WTC11 (cell line): ENCODE measurements at regions of chr14 and their contacts with region 1.

Region 1: GRCh38 chr14:52695481-52696091 is at the start of gene ERO1A:
- DNase-seq: peak; percentile 75
- ATAC-seq: peak; percentile 76
- H3K4me3 Mint-ChIP-seq: peak within 1 kb of the TSS; percentile 95
- H3K27ac Mint-ChIP-seq: peak within 1 kb of the TSS; percentile 92
- H3K4me1 Mint-ChIP-seq: peaks cover 28% of the 10 kb centered on the region
- H3K27me3 Mint-ChIP-seq: no peaks in the 10 kb centered on the region; the same call in none of the 2 replicates
- CTCF ChIP-seq: no peak
- total RNA-seq, gene ERO1A: 44.6 to 58.8 TPM (median 57.8 TPM) in 3 replicates

Region 2: DNA sequence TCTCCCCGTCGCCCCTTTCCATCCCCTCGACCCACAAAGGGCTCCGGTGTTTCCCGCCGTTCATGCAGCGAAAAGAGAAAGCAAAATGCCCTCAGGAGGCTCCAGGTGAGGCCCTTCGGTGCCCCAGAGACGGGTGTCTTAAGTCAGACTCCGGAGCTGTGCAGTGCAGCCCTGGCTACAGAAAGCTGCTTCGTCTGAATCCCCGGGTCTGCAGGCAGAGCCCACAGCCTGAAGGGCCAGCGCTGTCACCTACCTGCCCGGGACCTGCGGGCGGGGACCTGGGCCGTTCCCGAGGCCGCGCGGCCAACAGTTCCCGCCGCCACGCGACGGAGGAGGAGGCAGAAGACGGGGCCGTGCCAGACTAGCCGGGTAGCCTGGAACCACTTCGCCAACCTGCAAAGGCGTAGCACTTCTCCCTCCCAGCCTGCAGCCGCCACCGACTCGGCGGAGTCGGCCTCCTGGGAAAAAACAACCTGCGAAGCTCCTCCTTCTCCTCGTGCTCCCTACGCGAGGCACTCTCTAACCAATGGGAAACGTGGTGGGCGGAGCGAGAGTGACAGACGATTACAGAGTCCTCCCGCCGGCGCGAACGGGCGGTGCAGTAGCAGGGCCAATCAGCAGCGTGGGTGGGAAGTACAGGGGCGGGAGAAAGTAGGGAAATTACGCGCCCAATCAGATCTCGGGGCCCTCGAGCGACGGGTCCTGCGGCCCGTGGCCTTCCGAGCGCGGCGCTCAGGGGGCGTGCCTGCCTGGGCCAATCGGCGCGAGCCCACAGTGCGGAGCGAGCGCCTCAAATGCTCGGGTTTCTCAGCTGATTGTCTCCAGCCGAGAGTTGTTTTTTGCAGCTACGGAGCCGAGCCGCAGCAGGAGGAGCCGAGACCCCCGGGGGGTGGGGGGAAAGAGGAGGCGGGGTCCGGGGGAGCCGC is 143.3 kb before region 1 on chr14 and contains the starts of genes GPR137C and TXNDC16:
- CTCF ChIA-PET with region 1: no interaction called
- POLR2A ChIA-PET with region 1: interaction called, 12 read pairs
- DNase-seq: peak; percentile 100
- ATAC-seq: peak; percentile 91
- H3K4me3 Mint-ChIP-seq: peak within 1 kb of the TSS; percentile 92
- H3K27ac Mint-ChIP-seq: peak within 1 kb of the TSS; percentile 87
- H3K4me1 Mint-ChIP-seq: peaks cover 18% of the 10 kb centered on the region
- H3K27me3 Mint-ChIP-seq: peaks cover 12% of the 10 kb centered on the region
- CTCF ChIP-seq: no peak
- total RNA-seq, gene GPR137C: 2.7 to 4.1 TPM (median 4.0 TPM) in 3 replicates
- total RNA-seq, gene TXNDC16: 10.9 to 11.4 TPM (median 11.3 TPM) in 3 replicates

Region 3: DNA sequence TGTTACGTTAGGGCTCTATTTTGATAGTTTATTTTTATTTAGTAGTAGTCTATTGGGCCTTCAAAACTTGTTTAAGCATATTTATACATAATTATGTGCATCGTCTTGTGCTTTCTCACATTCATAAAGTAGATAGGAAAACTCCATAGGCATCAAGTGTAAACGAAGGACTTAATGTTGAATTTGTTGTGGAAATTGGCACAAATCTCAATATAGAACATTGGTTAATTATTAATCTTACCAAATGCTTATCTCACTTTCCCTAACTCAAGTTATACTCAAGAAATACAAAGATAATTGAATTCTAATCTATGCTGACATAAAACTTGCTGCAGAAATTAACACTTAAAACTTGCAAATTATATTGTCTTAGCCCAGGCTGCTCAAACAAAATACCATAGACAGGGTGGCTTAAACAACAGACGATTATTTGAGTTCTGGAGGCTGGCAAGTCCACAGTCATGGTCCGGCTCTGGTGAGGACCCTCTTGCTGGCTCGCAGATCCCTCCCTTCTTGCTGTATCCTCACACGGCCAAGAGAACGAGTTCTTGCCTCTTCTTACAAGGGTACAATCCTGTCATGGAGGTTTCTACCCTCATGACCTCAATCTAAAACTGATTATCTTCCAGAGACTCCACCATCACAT is 53.2 kb after region 1 on chr14:
- CTCF ChIA-PET with region 1: no interaction called
- POLR2A ChIA-PET with region 1: no interaction called
- DNase-seq: no peak
- ATAC-seq: no peak
- H3K4me3 Mint-ChIP-seq: no peak overlapping the region
- H3K27ac Mint-ChIP-seq: peak overlapping the region; percentile 89; the same call in 1 of the 2 replicates
- H3K4me1 Mint-ChIP-seq: no peaks in the 10 kb centered on the region
- H3K27me3 Mint-ChIP-seq: no peaks in the 10 kb centered on the region
- CTCF ChIP-seq: no peak